ENCODE measurements at regions of chr2 and their contacts with region 1.

Region 1: GRCh38 chr2:184611361-184612085 is 13.2 kb downstream of the ZNF804A start:
- DNase-seq: no peak
- ATAC-seq: no peak

Region 2: GRCh38 chr2:184256611-184257010 is 354.9 kb before region 1 on chr2:
- intact Hi-C with region 1: loop called in 1 of 2 experiments (anchors 10 kb)
- DNase-seq: no peak
- ATAC-seq: no peak